Activated naive CD4-positive, alpha-beta T cell treated with anti-CD3 and anti-CD28 coated beads, Interleukin-2, amount 10 ng/mL, durations not matched to agents 7 days and 5 days (primary cell): ENCODE measurements at regions of chr6 and their contacts with region 1.

Region 1: GRCh38 chr6:143940011-143940597 is 68.0 kb downstream of the PLAGL1 start:
- DNase-seq: peak; percentile 71
- H3K4me3 Mint-ChIP-seq: no peak overlapping the region
- H3K27ac Mint-ChIP-seq: no peak overlapping the region
- H3K4me1 Mint-ChIP-seq: peaks cover 3% of the 10 kb centered on the region
- H3K27me3 Mint-ChIP-seq: peaks cover 4% of the 10 kb centered on the region

Region 2: DNA sequence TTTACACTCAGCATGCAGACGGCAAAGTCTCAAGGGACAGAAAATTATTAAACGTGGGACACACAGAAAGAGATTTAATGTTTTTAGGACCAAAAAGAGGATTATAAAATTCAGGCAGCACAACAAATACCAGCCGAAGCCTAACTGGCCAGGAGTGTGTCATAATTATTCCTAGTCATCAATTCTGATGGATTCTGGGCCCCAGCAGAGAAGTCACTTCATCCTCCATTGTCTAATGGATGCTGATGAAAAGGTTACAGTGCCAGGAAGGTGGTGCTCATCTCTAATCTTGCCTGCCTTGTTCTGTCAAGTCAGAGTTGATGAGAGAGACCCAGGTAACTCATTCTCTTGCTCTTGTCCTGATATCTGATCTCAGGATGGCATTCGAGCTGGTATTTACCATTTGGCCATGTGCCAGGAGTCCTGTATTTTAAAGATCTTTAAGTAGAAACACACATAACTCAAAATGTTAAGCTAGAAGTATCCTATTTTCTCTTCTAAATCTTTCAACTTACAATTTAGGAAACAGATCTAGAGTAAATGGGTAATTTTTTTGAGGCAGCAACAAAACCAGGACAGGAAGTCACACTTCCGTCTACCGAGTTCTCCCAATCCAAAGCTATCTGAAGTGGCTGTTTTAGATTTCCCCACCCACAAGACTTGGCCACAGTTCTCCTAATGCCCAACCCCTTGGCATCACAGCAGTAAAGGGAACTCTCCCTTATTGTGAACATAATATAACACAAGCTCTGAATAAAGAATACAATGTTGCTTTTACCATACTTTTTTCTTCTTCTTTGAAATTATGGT is 539.6 kb before region 1 on chr6:
- CTCF ChIA-PET with region 1: no interaction called
- DNase-seq: no peak
- H3K4me3 Mint-ChIP-seq: no peak overlapping the region
- H3K27ac Mint-ChIP-seq: peak overlapping the region; percentile 68
- H3K4me1 Mint-ChIP-seq: peaks cover 20% of the 10 kb centered on the region
- H3K27me3 Mint-ChIP-seq: peaks cover 4% of the 10 kb centered on the region

Region 3: GRCh38 chr6:143529095-143529494 is 411.0 kb before region 1 on chr6:
- CTCF ChIA-PET with region 1: no interaction called
- DNase-seq: no peak
- H3K4me3 Mint-ChIP-seq: no peak overlapping the region
- H3K27ac Mint-ChIP-seq: peak overlapping the region; percentile 87
- H3K4me1 Mint-ChIP-seq: peaks cover 18% of the 10 kb centered on the region
- H3K27me3 Mint-ChIP-seq: no peaks in the 10 kb centered on the region

Region 4: GRCh38 chr6:143575440-143575839 is 364.7 kb before region 1 on chr6:
- CTCF ChIA-PET with region 1: interaction called, 51 read pairs
- DNase-seq: peak; percentile 54
- H3K4me3 Mint-ChIP-seq: no peak overlapping the region
- H3K27ac Mint-ChIP-seq: no peak overlapping the region
- H3K4me1 Mint-ChIP-seq: no peaks in the 10 kb centered on the region
- H3K27me3 Mint-ChIP-seq: no peaks in the 10 kb centered on the region

Region 5: GRCh38 chr6:143928853-143929252 is 11.3 kb before region 1 on chr6:
- CTCF ChIA-PET with region 1: interaction called, 12 read pairs
- DNase-seq: no peak
- H3K4me3 Mint-ChIP-seq: no peak overlapping the region
- H3K27ac Mint-ChIP-seq: no peak overlapping the region
- H3K4me1 Mint-ChIP-seq: no peaks in the 10 kb centered on the region
- H3K27me3 Mint-ChIP-seq: peaks cover 8% of the 10 kb centered on the region

Region 6: DNA sequence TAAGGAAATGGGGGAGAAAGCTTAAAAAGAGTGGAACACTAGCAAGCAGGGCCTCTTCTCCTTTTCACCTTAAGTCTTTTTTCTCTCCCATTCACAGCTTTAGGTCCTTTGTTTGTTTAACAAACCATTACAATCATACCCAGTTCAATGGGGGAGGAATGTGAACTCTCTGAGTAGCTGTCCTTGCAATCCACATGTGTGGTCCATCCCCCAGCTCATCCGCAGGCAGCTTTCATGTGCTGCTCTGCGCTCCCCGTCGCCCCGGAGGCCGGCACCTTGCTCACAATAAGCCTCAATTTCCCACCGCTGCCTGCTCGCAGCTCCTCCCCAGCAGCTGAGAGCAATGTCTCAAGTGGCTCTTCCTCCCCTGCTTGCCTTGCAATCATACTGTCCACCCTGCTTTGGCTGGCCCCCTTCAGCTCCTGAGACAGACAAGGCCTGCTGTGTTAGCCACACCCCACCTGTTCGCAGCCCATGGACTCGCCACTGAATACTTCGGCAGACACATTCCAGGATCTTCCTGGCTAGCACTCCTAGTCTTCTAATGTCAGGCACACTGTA is 18.8 kb after region 1 on chr6:
- CTCF ChIA-PET with region 1: interaction called, 14 read pairs
- DNase-seq: no peak
- H3K4me3 Mint-ChIP-seq: no peak overlapping the region
- H3K27ac Mint-ChIP-seq: no peak overlapping the region
- H3K4me1 Mint-ChIP-seq: no peaks in the 10 kb centered on the region
- H3K27me3 Mint-ChIP-seq: no peaks in the 10 kb centered on the region

Region 7: DNA sequence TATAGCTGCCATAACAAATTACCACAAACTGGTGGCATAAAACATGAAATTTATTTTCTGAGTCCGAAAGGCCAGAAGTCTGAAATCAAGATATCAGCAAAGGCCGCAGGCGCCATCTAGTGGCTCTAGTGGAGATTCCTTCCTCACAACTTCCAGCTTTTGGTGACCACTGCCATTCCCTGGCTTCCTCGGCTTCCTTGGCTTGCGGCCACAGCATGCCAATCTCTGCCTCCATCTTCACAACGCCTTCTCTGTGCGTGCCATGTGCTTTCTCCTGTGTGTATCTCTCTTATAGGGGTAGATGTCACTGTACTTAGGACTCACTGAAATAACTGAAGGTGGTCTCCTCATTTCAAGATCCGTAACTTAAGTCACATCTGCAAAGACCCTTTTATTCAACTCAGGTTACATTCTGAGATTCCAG is 73.4 kb after region 1 on chr6:
- CTCF ChIA-PET with region 1: interaction called, 71 read pairs
- DNase-seq: peak; percentile 73
- H3K4me3 Mint-ChIP-seq: no peak overlapping the region
- H3K27ac Mint-ChIP-seq: no peak overlapping the region
- H3K4me1 Mint-ChIP-seq: peaks cover 2% of the 10 kb centered on the region
- H3K27me3 Mint-ChIP-seq: peaks cover 38% of the 10 kb centered on the region

Region 8: GRCh38 chr6:144036064-144036834 is 96.1 kb after region 1 on chr6:
- CTCF ChIA-PET with region 1: interaction called, 21 read pairs
- DNase-seq: peak; percentile 52
- H3K4me3 Mint-ChIP-seq: peak overlapping the region; percentile 0
- H3K27ac Mint-ChIP-seq: no peak overlapping the region
- H3K4me1 Mint-ChIP-seq: peaks cover 16% of the 10 kb centered on the region
- H3K27me3 Mint-ChIP-seq: no peaks in the 10 kb centered on the region

Region 9: DNA sequence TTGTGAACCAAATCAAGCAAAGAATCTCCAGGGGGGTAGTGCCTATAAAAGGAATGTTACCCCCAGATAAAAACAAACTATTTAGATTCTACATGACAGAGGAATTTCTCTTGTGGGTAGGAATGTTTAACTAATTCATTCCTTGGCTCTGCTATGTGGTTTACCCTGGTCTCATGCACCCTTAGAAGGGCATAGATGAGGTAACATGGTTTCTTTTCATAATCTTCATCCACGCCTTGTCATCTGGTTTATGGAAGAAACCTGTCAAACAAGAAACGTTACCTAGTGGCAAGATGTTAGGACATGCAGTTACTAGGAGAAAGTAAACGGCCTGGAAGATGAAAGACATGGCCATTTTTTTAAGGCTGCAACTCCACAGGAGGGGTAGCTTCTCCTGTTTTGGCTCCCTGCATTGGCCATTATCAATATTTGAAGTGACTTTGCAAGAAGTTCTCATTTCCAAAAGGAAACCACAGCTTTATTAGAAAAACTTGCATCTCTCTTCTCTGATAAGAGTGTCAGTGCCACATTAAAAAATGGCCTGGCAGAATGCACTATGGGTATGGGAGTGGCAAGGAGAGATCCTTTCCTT is 255.7 kb after region 1 on chr6:
- CTCF ChIA-PET with region 1: no interaction called
- DNase-seq: no peak
- H3K4me3 Mint-ChIP-seq: no peak overlapping the region
- H3K27ac Mint-ChIP-seq: no peak overlapping the region
- H3K4me1 Mint-ChIP-seq: peaks cover 5% of the 10 kb centered on the region
- H3K27me3 Mint-ChIP-seq: peaks cover 5% of the 10 kb centered on the region